ENCODE measurements at regions of chr5 and their contacts with region 1.

Region 1: GRCh38 chr5:154461531-154461930 is 15.7 kb downstream of the SAP30L start:
- DNase-seq: peak in 1 of 2 experiments; percentile 35
- H3K4me3 ChIP-seq: no peak overlapping the region
- H3K4me3 Mint-ChIP-seq: no peak overlapping the region
- H3K27ac Mint-ChIP-seq: no peak overlapping the region
- H3K4me1 ChIP-seq: peaks cover 8% of the 10 kb centered on the region
- H3K4me1 Mint-ChIP-seq: peaks cover 5% of the 10 kb centered on the region
- H3K27me3 ChIP-seq: no peaks in the 10 kb centered on the region
- H3K27me3 Mint-ChIP-seq: no peaks in the 10 kb centered on the region
- CTCF ChIP-seq: peak; percentile 21 to 42

Region 2: GRCh38 chr5:154421868-154422267 is 39.7 kb before region 1 on chr5:
- CTCF ChIA-PET with region 1: interaction called, 6 read pairs
- POLR2A ChIA-PET with region 1: no interaction called
- intact Hi-C with region 1: loop called (anchors 1 kb)
- DNase-seq: peak in 1 of 2 experiments; percentile 54
- H3K4me3 ChIP-seq: no peak overlapping the region
- H3K4me3 Mint-ChIP-seq: no peak overlapping the region
- H3K27ac Mint-ChIP-seq: no peak overlapping the region
- H3K4me1 ChIP-seq: no peaks in the 10 kb centered on the region
- H3K4me1 Mint-ChIP-seq: no peaks in the 10 kb centered on the region
- H3K27me3 ChIP-seq: no peaks in the 10 kb centered on the region
- H3K27me3 Mint-ChIP-seq: no peaks in the 10 kb centered on the region
- CTCF ChIP-seq: peak; percentile 60 to 71

Region 3: DNA sequence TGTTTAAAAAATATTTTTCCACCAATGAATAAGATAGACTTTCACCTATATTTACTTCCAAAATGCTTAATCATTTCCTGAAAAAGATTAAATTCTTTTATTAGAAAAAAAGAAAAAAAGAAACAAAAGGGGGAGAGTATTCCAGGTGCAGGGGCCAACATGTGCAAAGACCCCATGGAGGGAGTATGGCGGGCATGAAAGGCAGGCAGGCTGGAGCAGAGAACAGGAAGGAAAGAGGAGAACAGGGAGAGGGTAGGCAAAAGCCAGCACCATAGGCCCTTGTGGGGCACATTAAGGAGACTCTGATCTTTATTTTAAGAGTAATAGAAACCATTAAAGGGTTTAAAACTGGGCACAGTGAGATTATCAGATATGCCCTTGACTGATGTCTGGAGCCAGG is 32.2 kb before region 1 on chr5:
- CTCF ChIA-PET with region 1: interaction called, 10 read pairs
- POLR2A ChIA-PET with region 1: no interaction called
- intact Hi-C with region 1: no loop called
- DNase-seq: no peak
- H3K4me3 ChIP-seq: no peak overlapping the region
- H3K4me3 Mint-ChIP-seq: no peak overlapping the region
- H3K27ac Mint-ChIP-seq: no peak overlapping the region
- H3K4me1 ChIP-seq: no peaks in the 10 kb centered on the region
- H3K4me1 Mint-ChIP-seq: no peaks in the 10 kb centered on the region
- H3K27me3 ChIP-seq: no peaks in the 10 kb centered on the region
- H3K27me3 Mint-ChIP-seq: no peaks in the 10 kb centered on the region
- CTCF ChIP-seq: no peak

Measured in Caco-2 (cell line).